ENCODE measurements at regions of chr20 and their contacts with region 1.

Region 1: GRCh38 chr20:50460460-50461267 is 49.5 kb upstream of the PTPN1 start:
- DNase-seq: peak; percentile 78
- ATAC-seq: peak; percentile 81
- H3K4me3 ChIP-seq: no peak overlapping the region
- H3K4me3 Mint-ChIP-seq: no peak overlapping the region
- H3K27ac ChIP-seq: no peak overlapping the region
- H3K27ac Mint-ChIP-seq: no peak overlapping the region
- H3K4me1 ChIP-seq: peaks cover 3 to 7% of the 10 kb centered on the region in 2 donors
- H3K4me1 Mint-ChIP-seq: peaks cover 2% of the 10 kb centered on the region
- H3K27me3 ChIP-seq: peaks cover 0 to 21% (median 5%) of the 10 kb centered on the region in 4 experiments
- H3K27me3 Mint-ChIP-seq: peaks cover 24% of the 10 kb centered on the region
- CTCF ChIP-seq: peak; percentile 85

Region 2: GRCh38 chr20:50070991-50071888 is 389.4 kb before region 1 on chr20:
- CTCF ChIA-PET with region 1: no interaction called
- POLR2A ChIA-PET with region 1: no interaction called
- intact Hi-C with region 1: no loop called
- DNase-seq: peak; percentile 91
- ATAC-seq: peak; percentile 100
- H3K4me3 ChIP-seq: peak overlapping the region in 3 of 5 experiments; percentile 25 to 54 (median 40)
- H3K4me3 Mint-ChIP-seq: peak overlapping the region; percentile 15
- H3K27ac ChIP-seq: no peak overlapping the region
- H3K27ac Mint-ChIP-seq: no peak overlapping the region
- H3K4me1 ChIP-seq: peaks cover 5 to 10% of the 10 kb centered on the region in 2 donors
- H3K4me1 Mint-ChIP-seq: peaks cover 5% of the 10 kb centered on the region
- H3K27me3 ChIP-seq: no peaks in the 10 kb centered on the region
- H3K27me3 Mint-ChIP-seq: no peaks in the 10 kb centered on the region
- CTCF ChIP-seq: peak; percentile 99

Region 3: DNA sequence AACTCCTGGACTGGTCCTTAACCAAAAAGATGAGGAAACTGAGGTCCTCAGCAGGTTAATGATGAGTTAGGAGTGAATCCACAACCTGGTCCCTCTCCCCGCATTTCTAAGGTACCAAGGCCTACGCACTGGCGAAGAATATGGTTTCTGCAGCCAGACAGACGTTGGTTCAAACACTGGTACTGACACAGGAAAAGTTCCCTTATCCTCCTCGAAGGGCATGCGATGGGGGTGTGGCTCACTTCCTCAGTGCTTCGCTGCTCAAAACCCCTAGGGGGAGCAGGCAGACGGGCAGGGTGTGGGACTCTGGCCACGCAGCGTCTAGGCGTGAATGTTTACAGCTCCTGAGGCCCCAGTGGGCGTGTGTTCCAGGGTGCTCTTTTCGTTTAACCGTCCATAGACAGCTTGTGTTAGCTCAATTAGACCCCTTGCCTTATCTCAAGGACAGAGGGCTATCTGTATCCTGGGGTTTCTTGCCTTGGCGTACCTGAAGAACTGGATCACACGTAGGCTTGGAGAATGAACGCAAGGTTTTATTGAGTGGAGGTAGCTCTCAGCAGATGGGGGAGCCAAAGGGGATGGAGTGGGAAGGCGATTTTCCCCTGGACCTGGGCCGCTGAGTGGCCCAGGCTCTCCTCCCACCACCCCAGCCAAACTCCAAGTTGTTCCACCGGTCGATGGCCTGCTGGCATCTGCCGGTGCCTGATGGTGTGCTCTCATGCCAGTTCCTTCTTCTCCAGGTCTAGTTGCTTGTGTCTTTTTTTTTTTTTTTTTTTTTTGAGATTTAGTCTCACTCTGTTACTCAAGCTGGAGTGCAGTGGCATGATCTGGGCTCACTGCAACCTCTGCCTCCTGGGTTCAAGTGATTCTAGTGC is 17.7 kb after region 1 on chr20:
- CTCF ChIA-PET with region 1: interaction called, 20 read pairs
- POLR2A ChIA-PET with region 1: no interaction called
- intact Hi-C with region 1: no loop called
- DNase-seq: peak; percentile 84
- ATAC-seq: peak; percentile 99
- H3K4me3 ChIP-seq: no peak overlapping the region
- H3K4me3 Mint-ChIP-seq: peak overlapping the region; percentile 44
- H3K27ac ChIP-seq: no peak overlapping the region
- H3K27ac Mint-ChIP-seq: peak overlapping the region; percentile 67
- H3K4me1 ChIP-seq: peaks cover 20 to 32% of the 10 kb centered on the region in 2 donors
- H3K4me1 Mint-ChIP-seq: peaks cover 33% of the 10 kb centered on the region
- H3K27me3 ChIP-seq: no peaks in the 10 kb centered on the region
- H3K27me3 Mint-ChIP-seq: no peaks in the 10 kb centered on the region
- CTCF ChIP-seq: peak; percentile 73

Region 4: GRCh38 chr20:50588034-50588611 is 127.5 kb after region 1 on chr20:
- CTCF ChIA-PET with region 1: interaction called, 24 read pairs
- POLR2A ChIA-PET with region 1: no interaction called
- intact Hi-C with region 1: no loop called
- DNase-seq: peak; percentile 79
- ATAC-seq: peak; percentile 58
- H3K4me3 ChIP-seq: no peak overlapping the region
- H3K4me3 Mint-ChIP-seq: no peak overlapping the region
- H3K27ac ChIP-seq: no peak overlapping the region
- H3K27ac Mint-ChIP-seq: peak overlapping the region; percentile 50
- H3K4me1 ChIP-seq: peaks cover 4 to 10% of the 10 kb centered on the region in 2 donors
- H3K4me1 Mint-ChIP-seq: peaks cover 13% of the 10 kb centered on the region
- H3K27me3 ChIP-seq: no peaks in the 10 kb centered on the region
- H3K27me3 Mint-ChIP-seq: no peaks in the 10 kb centered on the region
- CTCF ChIP-seq: peak; percentile 98

Measured in B cell (primary cell).